ENCODE measurements at regions of chr1 and their contacts with region 1.

Region 1: DNA sequence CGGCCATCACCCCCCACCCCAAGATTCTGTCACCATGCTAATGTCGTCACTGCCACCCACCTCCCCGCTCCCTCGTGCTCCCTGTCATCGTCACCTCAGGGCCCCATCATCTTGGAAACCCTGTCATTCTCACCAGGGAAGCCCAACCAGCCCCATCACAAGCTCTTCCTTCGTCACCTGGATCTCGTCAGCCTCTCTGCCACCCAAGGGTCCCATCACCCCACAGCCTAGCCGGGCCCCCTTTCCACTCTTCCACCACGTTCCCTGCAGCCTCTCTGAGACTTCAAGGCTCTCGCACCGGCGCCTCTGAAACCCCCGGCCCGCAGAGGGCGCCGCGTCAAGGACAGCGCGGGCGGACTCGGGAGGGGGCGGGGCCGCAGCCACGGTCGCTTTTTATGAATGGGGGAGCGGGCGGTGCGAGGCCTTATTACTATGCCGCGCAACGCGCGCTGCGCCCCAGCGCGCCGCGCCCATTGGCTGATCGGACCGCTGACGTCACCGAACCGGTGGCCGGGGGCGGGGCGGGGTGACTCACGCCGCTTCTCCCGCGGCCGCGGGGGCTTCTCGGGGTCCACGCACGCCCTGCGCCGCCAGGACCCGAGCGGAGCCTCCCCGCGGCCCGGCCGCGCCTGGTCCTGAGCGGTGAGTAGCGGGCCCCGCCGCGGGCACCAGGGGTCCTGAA is at the start of gene GPR3:
- DNase-seq: peak; percentile 88 to 92 (median 89)
- H3K4me3 ChIP-seq: peak within 1 kb of the TSS; percentile 17 to 68
- H3K4me3 Mint-ChIP-seq: peak within 1 kb of the TSS; percentile 79 to 93 (median 84)
- H3K27ac ChIP-seq: peak within 1 kb of the TSS; percentile 42
- H3K27ac Mint-ChIP-seq: peak within 1 kb of the TSS; percentile 58 to 97 (median 94)
- H3K4me1 ChIP-seq: peaks cover 26% of the 10 kb centered on the region
- H3K4me1 Mint-ChIP-seq: peaks cover 11 to 30% (median 17%) of the 10 kb centered on the region in 4 donors
- H3K27me3 ChIP-seq: no peaks in the 10 kb centered on the region
- H3K27me3 Mint-ChIP-seq: peaks cover 1 to 4% of the 10 kb centered on the region in 2 donors
- total RNA-seq, gene GPR3: not detected

Region 2: DNA sequence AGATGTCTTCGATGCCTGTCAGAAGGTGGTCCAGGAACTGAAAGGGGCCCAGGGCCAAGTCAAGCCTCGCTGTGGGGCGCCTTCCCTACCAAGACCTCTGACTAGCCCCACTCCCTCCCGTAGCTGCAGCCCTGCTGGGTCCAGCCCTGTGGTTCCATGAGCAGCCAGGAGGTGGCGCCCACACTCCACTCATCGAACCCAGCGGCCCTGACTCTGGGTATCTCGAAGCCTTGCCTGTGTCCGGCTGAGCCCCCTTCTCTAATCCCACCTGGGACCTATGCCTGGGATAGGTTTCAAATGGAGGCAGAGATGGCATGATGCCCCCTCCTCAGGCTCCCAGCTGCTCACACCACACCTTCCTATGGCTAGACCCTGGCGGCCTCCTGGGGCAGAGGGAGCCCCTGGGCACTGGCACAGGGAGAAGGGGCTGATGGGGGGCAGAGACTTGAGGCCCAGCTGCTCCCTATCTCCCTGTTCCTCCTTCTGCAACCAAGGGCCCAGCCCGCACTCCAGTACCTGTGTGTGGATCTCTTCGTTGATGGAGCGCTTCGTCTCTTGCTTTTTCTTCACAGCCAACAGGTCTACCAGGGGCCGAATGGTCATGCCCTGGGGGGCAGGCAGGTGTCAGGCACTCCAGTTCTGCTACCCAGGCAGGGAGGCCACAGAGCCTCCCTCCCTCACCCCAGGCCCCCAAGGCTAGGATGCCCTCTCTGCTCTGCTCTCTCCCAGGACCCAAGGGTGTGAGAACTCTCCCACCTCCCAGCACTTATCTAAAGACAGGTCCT is 289.3 kb before region 1 on chr1:
- CTCF ChIA-PET with region 1: interaction called, 15 read pairs
- POLR2A ChIA-PET with region 1: no interaction called
- intact Hi-C with region 1: loop called (anchors 2 kb)
- DNase-seq: peak; percentile 67 to 79 (median 71)
- H3K4me3 ChIP-seq: no peak overlapping the region
- H3K4me3 Mint-ChIP-seq: peak overlapping the region in 1 of 8 donors; percentile 26
- H3K27ac ChIP-seq: no peak overlapping the region
- H3K27ac Mint-ChIP-seq: peak overlapping the region in 4 of 7 donors; percentile 24 to 71 (median 38)
- H3K4me1 ChIP-seq: no peaks in the 10 kb centered on the region
- H3K4me1 Mint-ChIP-seq: peaks cover 0 to 4% (median under 1%) of the 10 kb centered on the region in 4 donors
- H3K27me3 ChIP-seq: no peaks in the 10 kb centered on the region
- H3K27me3 Mint-ChIP-seq: no peaks in the 10 kb centered on the region

Region 3: GRCh38 chr1:27192039-27192529 is 200.2 kb before region 1 on chr1:
- CTCF ChIA-PET with region 1: interaction called, 4 read pairs
- POLR2A ChIA-PET with region 1: no interaction called
- intact Hi-C with region 1: loop called (anchors 5 kb)
- DNase-seq: no peak
- H3K4me3 ChIP-seq: no peak overlapping the region
- H3K4me3 Mint-ChIP-seq: no peak overlapping the region
- H3K27ac ChIP-seq: no peak overlapping the region
- H3K27ac Mint-ChIP-seq: no peak overlapping the region
- H3K4me1 ChIP-seq: no peaks in the 10 kb centered on the region
- H3K4me1 Mint-ChIP-seq: no peaks in the 10 kb centered on the region
- H3K27me3 ChIP-seq: no peaks in the 10 kb centered on the region
- H3K27me3 Mint-ChIP-seq: peaks cover 0 to 2% of the 10 kb centered on the region in 2 donors

Region 4: DNA sequence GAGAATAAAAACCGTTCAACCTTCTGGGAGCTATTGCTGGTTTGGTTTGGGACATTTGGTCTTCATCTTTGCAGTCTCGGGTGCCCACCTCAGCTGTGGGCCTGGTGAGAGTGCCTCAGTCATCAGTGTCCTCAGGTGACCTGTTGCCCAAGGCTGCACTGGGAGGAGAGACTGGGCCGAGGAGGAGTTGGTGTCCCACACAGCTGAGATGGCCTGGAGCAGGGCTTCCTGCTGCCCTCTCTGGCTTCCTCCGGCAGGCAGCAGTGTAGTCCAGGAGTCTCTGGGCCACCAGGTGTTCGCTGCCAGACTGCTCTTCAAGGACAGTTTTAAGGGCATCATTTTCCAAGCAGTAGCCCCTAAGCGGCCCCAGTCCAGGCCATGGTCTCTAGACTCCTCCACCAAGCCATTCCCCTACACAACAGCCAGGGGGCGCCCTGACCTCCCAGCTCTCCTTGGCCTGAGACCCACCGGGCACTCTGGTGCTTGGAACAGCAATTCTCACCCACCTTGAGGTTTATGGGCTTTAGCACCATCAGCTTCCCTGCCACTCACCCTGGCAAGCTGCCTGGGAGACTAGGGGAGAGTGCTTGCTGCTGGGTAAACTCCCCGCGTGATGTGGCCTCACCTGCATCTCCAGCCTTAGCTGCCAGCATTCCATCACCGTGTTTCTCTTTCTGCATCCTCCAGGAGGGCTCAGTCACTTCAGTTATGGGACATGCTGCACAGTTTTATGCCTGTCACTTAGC is 59.5 kb before region 1 on chr1:
- CTCF ChIA-PET with region 1: interaction called, 130 read pairs
- POLR2A ChIA-PET with region 1: interaction called, 4 read pairs
- intact Hi-C with region 1: loop called (anchors 1 kb)
- DNase-seq: peak; percentile 54 to 65 (median 58)
- H3K4me3 ChIP-seq: no peak overlapping the region
- H3K4me3 Mint-ChIP-seq: peak overlapping the region in 2 of 8 donors; percentile 7 to 25
- H3K27ac ChIP-seq: peak overlapping the region; percentile 10
- H3K27ac Mint-ChIP-seq: peak overlapping the region in 6 of 7 donors; percentile 5 to 75 (median 61)
- H3K4me1 ChIP-seq: peaks cover 33% of the 10 kb centered on the region
- H3K4me1 Mint-ChIP-seq: peaks cover 22 to 48% (median 34%) of the 10 kb centered on the region in 4 donors
- H3K27me3 ChIP-seq: no peaks in the 10 kb centered on the region
- H3K27me3 Mint-ChIP-seq: no peaks in the 10 kb centered on the region

Region 5: DNA sequence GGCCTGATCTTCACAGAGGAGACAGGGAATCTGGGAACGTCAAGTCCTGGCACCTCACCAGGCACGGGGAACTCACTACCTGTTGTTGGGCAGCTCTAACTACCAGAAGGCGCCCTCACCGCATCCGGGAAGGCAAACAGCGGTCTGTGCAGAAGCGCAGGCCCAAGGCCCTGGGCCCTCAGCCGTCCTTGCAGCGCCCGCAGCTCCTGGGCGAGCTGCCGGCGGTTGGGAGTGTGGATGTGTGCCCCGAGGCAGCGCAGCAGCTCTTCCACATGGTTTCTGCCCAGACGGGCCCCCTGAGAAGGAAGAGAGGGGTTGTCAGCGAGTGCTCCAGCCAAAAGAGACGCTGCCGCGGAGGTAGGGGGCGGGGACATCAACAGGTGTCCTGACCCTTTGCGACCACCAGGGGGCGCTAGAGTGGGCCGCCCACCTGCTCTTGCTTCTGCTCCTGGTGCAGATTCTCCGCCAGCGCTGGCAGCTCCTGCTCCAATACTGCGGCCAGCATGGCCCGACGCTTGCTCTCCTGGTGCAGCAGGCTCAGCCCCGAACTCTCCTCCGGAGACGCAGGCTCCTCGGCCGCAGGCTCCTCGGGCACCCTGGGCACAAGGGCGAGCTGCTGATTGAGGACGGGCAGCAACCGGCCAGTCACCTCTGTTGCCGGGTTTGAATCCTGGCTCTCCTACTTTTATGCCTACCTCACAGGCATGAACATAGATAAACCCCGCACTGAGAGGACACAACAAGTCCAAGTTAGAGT is 34.8 kb before region 1 on chr1:
- CTCF ChIA-PET with region 1: interaction called, 34 read pairs
- POLR2A ChIA-PET with region 1: interaction called, 3 read pairs
- intact Hi-C with region 1: loop called (anchors 1 kb)
- DNase-seq: peak; percentile 80 to 84 (median 83)
- H3K4me3 ChIP-seq: peak overlapping the region; percentile 44 to 71
- H3K4me3 Mint-ChIP-seq: peak overlapping the region; percentile 74 to 85 (median 80)
- H3K27ac ChIP-seq: peak overlapping the region; percentile 57
- H3K27ac Mint-ChIP-seq: peak overlapping the region; percentile 72 to 90 (median 84)
- H3K4me1 ChIP-seq: peaks cover 47% of the 10 kb centered on the region
- H3K4me1 Mint-ChIP-seq: peaks cover 18 to 56% (median 40%) of the 10 kb centered on the region in 4 donors
- H3K27me3 ChIP-seq: no peaks in the 10 kb centered on the region
- H3K27me3 Mint-ChIP-seq: no peaks in the 10 kb centered on the region

Region 6: DNA sequence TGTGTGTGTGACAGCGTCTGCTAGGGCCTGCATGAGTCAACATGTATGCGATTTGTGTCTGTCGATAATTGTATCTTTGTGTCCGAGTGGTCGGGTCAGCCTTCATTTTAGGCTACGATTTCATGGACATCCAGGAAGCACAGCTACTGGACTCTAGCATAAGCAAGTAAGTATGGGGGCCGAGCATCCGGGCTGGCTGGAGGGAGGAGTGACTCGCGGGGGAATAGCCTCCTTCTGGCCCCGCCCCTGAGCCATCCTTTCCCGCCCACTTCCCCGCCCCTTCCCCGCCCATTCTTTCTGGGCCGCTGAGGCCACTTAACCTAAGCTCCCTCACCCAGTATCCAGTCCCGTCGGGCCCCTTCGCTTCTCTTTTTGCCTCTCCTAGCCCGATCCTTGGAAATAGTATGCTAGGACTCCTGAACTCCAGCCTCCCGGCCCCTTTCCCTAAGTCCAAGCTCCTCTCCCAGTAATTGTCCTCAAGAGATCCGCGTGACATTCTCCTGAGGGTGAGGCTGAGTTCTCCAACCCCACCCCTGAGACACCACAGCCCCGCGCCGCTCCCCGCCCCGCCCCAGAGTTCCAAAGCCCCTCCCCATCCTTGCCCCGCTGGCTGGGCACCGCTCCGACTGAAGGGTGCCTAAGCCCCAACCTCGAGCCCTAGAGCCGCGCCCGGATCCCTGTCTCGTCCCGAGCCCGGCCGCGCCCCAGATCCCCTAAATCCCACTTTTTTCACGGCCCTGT is 26.7 kb before region 1 on chr1:
- CTCF ChIA-PET with region 1: interaction called, 22 read pairs
- POLR2A ChIA-PET with region 1: interaction called, 4 read pairs
- intact Hi-C with region 1: loop called (anchors 2 kb)
- DNase-seq: peak; percentile 65 to 76 (median 67)
- H3K4me3 ChIP-seq: peak overlapping the region; percentile 36 to 54
- H3K4me3 Mint-ChIP-seq: peak overlapping the region; percentile 86 to 94 (median 88)
- H3K27ac ChIP-seq: peak overlapping the region; percentile 51
- H3K27ac Mint-ChIP-seq: peak overlapping the region; percentile 49 to 88 (median 77)
- H3K4me1 ChIP-seq: peaks cover 18% of the 10 kb centered on the region
- H3K4me1 Mint-ChIP-seq: peaks cover 13 to 52% (median 25%) of the 10 kb centered on the region in 4 donors
- H3K27me3 ChIP-seq: no peaks in the 10 kb centered on the region
- H3K27me3 Mint-ChIP-seq: no peaks in the 10 kb centered on the region

Region 7: DNA sequence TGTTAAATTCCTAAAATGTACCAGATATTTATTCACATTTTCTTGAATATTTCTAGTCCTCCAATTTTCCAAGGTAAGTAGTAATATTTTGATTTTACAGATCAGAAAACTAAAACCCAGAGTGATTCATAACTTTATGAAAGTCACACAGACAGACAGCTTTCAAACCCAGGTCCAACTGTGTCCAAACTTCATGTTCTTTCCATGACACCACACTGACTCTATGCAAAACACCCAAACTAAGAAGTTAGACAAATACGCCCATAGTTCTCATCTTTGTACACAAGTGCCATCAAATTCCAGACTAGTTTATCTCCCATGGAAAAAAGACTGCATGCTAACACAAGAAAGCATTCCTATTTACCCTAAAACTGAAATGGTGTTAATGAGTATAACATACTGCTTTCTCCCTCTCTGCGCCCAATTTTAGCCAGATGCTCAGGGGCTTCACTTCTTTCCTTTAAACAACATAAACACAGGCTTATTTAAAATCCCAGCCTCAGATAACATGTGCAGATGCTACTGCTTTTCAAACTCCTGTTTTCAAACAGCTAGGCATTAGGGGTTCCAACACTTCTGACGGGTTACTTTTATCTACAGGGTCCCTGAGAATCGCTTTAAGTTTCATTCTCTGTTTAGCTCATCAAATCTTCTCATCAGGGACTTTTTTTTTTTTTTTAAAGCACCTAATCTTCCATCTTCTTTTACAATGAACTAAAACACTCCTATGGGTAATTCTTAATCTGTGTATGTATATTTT is 53.1 kb after region 1 on chr1:
- CTCF ChIA-PET with region 1: no interaction called
- POLR2A ChIA-PET with region 1: no interaction called
- intact Hi-C with region 1: no loop called
- DNase-seq: no peak
- H3K4me3 ChIP-seq: no peak overlapping the region
- H3K4me3 Mint-ChIP-seq: peak overlapping the region in 7 of 8 donors; percentile 21 to 84 (median 54)
- H3K27ac ChIP-seq: no peak overlapping the region
- H3K27ac Mint-ChIP-seq: peak overlapping the region; percentile 49 to 89 (median 72)
- H3K4me1 ChIP-seq: peaks cover 28% of the 10 kb centered on the region
- H3K4me1 Mint-ChIP-seq: peaks cover 32 to 47% (median 43%) of the 10 kb centered on the region in 4 donors
- H3K27me3 ChIP-seq: no peaks in the 10 kb centered on the region
- H3K27me3 Mint-ChIP-seq: no peaks in the 10 kb centered on the region